BJ (cell line): ENCODE measurements at regions of chr7 and their contacts with region 1.

Region 1: DNA sequence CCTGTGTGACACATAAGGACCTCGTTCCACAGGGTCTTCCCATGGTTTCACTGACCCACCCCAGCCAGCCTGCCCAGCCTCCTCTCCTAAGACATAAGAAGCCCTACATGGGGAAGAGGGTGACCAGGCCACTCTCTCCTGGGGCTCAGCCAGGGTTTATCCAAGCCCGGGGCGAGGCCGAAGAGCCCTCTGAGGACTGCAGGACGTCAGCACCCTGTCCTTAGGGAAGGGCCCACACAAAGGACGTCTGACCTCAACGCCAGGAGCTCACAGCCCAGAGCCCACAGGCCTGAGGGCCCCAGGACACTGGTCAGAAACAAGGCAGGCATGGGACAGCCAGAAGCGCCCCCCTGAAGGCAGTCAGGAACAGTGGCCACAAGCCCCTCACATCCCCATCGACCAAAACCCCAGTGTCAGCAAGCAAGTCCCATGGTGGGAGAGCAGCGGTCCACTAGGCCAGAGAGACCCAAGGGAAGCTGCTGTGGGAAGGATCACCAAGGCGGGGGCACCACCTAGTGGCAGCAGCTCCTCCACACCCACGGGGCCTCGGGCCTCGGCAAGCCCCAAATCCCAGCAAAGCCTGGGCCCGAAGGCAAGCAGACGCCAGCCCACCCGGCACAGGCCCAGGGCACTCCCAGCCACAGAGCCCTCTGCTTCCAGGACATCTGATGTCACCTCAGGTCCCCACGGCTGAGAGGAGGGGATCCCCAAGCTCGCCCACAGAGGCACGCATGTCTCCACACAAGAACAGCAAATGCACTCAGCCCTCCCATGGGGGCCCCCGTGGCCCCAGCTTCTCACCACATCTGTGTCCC is 23.4 kb downstream of the MAD1L1 start:
- DNase-seq: no peak
- H3K4me3 ChIP-seq: no peak overlapping the region
- H3K27me3 ChIP-seq: no peaks in the 10 kb centered on the region
- CTCF ChIP-seq: peak; percentile 93

Region 2: GRCh38 chr7:1664711-1665548 is 544.4 kb before region 1 on chr7:
- CTCF ChIA-PET with region 1: interaction called, 11 read pairs
- POLR2A ChIA-PET with region 1: interaction called, 9 read pairs
- DNase-seq: no peak
- H3K4me3 ChIP-seq: peak overlapping the region; percentile 70
- H3K27me3 ChIP-seq: peaks cover 8% of the 10 kb centered on the region
- CTCF ChIP-seq: peak; percentile 84

Region 3: GRCh38 chr7:2224934-2225333 is 15.6 kb after region 1 on chr7:
- CTCF ChIA-PET with region 1: no interaction called
- POLR2A ChIA-PET with region 1: no interaction called
- DNase-seq: no peak
- H3K4me3 ChIP-seq: no peak overlapping the region
- H3K27me3 ChIP-seq: no peaks in the 10 kb centered on the region
- CTCF ChIP-seq: no peak